SK-N-SH (cell line): ENCODE measurements at regions of chr14 and their contacts with region 1.

Region 1: GRCh38 chr14:102096214-102097114 is 9.6 kb upstream of the HSP90AA1 start:
- DNase-seq: peak; percentile 80
- H3K4me3 ChIP-seq: peak overlapping the region in 1 of 2 experiments; percentile 4; a peak in 1 of 4 replicates
- H3K27ac ChIP-seq: no peak overlapping the region
- H3K4me1 ChIP-seq: peaks cover 5 to 9% of the 10 kb centered on the region in 2 experiments; a peak in 2 of 4 replicates
- H3K27me3 ChIP-seq: no peaks in the 10 kb centered on the region
- CTCF ChIP-seq: peak; percentile 91
- EP300 ChIP-seq: no peak
- RAD21 ChIP-seq: peak; percentile 91

Region 2: GRCh38 chr14:102046343-102047278 is 49.9 kb before region 1 on chr14:
- CTCF ChIA-PET with region 1: interaction called, 11 read pairs
- POLR2A ChIA-PET with region 1: no interaction called
- DNase-seq: peak; percentile 85
- H3K4me3 ChIP-seq: no peak overlapping the region
- H3K27ac ChIP-seq: no peak overlapping the region
- H3K4me1 ChIP-seq: no peaks in the 10 kb centered on the region
- H3K27me3 ChIP-seq: no peaks in the 10 kb centered on the region
- CTCF ChIP-seq: peak; percentile 30
- EP300 ChIP-seq: no peak
- RAD21 ChIP-seq: peak; percentile 74

Region 3: DNA sequence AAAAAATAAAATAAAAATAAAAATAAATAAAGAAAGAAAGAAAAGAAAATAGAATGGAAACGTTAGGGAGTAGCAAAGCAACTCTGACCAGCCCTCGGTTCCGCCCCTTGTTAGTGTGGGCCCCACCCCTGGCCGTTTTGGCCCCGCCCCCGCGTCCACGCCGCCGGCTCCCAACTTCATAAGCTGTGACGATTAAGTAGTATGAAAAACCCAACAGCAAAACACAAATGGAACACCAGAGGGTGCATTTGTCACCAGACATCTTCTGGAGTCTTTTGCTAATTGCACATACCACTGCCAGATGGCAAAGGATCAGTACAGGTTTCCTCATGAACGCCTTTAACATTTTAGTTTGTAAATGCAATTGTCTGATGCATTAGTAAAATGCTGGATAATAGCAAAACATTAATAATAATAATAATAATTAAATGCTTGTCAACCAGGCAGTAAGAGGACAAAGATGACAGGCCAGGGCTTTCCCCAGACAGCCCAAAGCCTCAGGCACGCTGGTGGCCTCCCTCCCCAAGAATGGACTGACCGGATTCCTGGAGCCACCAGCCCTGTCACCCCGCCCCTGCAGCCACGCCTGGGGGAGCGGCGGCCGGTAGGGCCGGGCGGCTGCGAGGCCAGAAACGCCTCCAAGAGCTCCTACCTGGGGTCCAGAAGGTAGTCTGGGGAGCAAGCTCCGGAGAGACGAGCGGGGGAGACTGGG is 33.2 kb before region 1 on chr14:
- CTCF ChIA-PET with region 1: interaction called, 31 read pairs
- POLR2A ChIA-PET with region 1: no interaction called
- DNase-seq: peak; percentile 94
- H3K4me3 ChIP-seq: no peak overlapping the region
- H3K27ac ChIP-seq: no peak overlapping the region
- H3K4me1 ChIP-seq: no peaks in the 10 kb centered on the region
- H3K27me3 ChIP-seq: no peaks in the 10 kb centered on the region
- CTCF ChIP-seq: peak; percentile 60
- EP300 ChIP-seq: no peak
- RAD21 ChIP-seq: peak; percentile 76

Region 4: GRCh38 chr14:102249041-102249440 is 152.6 kb after region 1 on chr14:
- CTCF ChIA-PET with region 1: no interaction called
- POLR2A ChIA-PET with region 1: no interaction called
- DNase-seq: no peak
- H3K4me3 ChIP-seq: no peak overlapping the region
- H3K27ac ChIP-seq: no peak overlapping the region
- H3K4me1 ChIP-seq: no peaks in the 10 kb centered on the region
- H3K27me3 ChIP-seq: no peaks in the 10 kb centered on the region
- CTCF ChIP-seq: no peak
- EP300 ChIP-seq: no peak
- RAD21 ChIP-seq: no peak